ENCODE measurements at regions of chr6 and their contacts with region 1.

Region 1: DNA sequence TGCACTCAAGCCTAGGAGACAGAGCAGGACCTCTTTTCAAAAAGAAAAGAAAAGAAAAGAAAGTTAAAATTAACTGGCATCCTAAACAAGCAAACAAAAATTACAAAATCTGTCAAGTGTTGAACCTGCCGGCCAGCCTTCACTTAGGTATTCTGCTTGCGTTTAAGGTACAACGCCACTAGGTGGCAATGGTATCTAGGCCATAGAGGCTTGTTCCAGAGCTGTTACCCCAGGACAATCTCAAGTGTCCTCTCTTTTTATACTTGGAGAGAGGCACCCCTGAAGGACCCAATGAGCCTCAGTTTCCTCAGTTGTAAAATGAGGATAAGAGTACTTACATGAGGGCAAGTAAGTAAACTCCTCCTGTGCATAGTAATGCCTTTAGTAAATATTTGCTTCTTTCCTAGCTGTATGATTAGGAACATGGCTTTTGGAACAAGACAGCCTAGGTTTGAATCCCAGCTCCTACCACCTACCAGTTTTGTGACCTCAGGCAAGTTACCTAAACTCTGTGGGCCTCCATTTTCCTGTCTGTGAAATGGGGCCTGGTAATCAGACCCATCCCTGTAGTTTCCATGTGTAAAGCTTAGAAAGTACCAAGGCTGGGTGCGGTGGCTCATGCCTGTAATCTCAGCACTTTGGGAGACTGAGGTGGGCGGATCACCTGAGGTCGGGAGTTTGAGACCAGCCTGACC is 5.8 kb upstream of the PACSIN1 start:
- DNase-seq: peak; percentile 75
- H3K4me3 Mint-ChIP-seq: no peak overlapping the region
- H3K27ac Mint-ChIP-seq: no peak overlapping the region
- H3K4me1 Mint-ChIP-seq: peaks cover 1% of the 10 kb centered on the region
- H3K27me3 Mint-ChIP-seq: peaks cover 10% of the 10 kb centered on the region

Region 2: GRCh38 chr6:34447910-34448309 is 12.1 kb before region 1 on chr6:
- CTCF ChIA-PET with region 1: interaction called, 10 read pairs
- intact Hi-C with region 1: no loop called
- DNase-seq: no peak
- H3K4me3 Mint-ChIP-seq: no peak overlapping the region
- H3K27ac Mint-ChIP-seq: no peak overlapping the region
- H3K4me1 Mint-ChIP-seq: no peaks in the 10 kb centered on the region
- H3K27me3 Mint-ChIP-seq: no peaks in the 10 kb centered on the region

Region 3: DNA sequence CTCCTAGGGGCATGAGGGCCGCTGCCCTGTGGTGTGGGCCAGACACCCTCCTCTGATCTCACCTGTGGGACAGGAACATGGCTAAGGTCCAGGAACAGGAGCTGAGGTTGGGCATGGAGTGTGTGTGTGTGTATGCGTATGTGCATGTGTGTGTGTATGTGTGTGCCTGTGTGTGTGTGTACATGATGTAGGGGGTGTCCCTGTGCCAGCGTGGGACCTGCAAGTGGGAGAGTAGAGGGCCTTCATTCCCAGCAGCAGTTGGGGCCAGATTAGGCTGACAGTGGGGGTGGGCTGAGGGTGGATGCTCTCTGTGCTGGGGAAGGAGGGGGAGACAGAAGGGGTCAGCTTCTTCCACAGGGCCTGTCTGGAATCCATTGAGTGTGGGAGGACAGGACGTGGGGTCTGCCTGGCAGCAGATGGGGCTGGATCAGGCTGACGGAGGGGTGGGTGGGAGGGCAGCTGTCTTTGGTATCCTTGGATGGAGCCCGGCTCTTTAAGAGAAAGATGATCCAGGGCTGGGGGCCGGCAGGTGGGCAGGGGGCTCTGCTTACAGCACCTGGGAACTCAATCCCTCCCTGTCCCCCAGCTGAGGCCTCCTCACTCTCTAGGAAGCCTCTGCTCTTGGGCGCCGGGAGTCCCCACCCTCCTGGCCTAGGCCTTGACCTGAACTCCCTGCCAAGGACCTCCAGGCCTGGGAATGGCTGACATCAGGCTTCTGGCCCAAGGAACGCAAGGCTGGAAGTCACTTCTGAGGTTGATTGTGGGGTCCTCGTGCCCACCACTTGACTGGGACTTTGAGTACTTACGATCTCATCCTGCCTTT is 52.1 kb after region 1 on chr6:
- CTCF ChIA-PET with region 1: no interaction called
- intact Hi-C with region 1: no loop called
- DNase-seq: no peak
- H3K4me3 Mint-ChIP-seq: no peak overlapping the region
- H3K27ac Mint-ChIP-seq: no peak overlapping the region
- H3K4me1 Mint-ChIP-seq: no peaks in the 10 kb centered on the region
- H3K27me3 Mint-ChIP-seq: no peaks in the 10 kb centered on the region

Region 4: GRCh38 chr6:34583461-34583860 is 123.4 kb after region 1 on chr6:
- CTCF ChIA-PET with region 1: interaction called, 5 read pairs
- intact Hi-C with region 1: loop called (anchors 1 kb)
- DNase-seq: peak; percentile 24
- H3K4me3 Mint-ChIP-seq: no peak overlapping the region
- H3K27ac Mint-ChIP-seq: no peak overlapping the region
- H3K4me1 Mint-ChIP-seq: peaks cover 6% of the 10 kb centered on the region
- H3K27me3 Mint-ChIP-seq: no peaks in the 10 kb centered on the region

Region 5: DNA sequence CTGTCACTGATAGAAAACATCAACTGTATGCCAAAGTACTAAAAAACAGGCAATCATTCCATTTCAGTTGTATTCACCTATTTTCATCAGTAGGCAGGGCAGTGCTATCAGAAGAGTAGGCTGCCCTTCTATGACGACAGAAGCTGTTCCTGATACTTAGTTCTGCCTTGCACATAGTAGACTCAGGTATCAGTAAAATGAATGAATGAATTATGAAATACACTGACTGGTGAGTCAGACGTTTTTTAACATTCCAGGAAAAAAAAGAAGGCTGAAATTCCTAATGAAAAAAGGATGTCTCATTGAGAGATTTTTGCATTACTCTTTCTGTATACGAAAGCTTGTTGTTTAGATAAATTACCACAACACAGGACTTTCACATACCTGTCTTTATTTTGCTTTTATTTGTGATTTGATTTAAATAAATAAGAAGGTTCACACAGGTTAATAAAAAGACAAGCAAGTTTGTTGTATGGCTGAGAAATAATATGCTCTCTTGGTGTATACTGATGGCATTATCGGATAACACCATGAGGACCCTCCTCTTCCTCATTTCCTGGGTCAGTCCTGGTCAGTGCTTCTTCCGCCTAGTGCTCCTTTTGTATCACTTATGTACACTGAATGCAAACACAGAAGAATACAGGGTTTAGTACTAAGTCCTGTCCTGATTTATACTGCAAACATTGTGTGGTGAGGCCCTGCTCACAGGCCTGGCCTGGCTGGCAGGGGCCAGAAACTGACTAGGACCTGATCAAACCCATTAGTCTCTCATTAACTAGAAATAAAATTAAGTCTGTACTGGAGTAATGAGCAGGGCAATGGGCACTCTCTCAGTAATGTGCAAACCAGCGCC is 135.5 kb after region 1 on chr6:
- CTCF ChIA-PET with region 1: interaction called, 15 read pairs
- intact Hi-C with region 1: no loop called
- DNase-seq: no peak
- H3K4me3 Mint-ChIP-seq: no peak overlapping the region
- H3K27ac Mint-ChIP-seq: no peak overlapping the region
- H3K4me1 Mint-ChIP-seq: peaks cover 16% of the 10 kb centered on the region
- H3K27me3 Mint-ChIP-seq: no peaks in the 10 kb centered on the region

Region 6: GRCh38 chr6:34610819-34611477 is 150.9 kb after region 1 on chr6:
- CTCF ChIA-PET with region 1: interaction called, 111 read pairs
- intact Hi-C with region 1: loop called (anchors 1 kb)
- DNase-seq: no peak
- H3K4me3 Mint-ChIP-seq: no peak overlapping the region
- H3K27ac Mint-ChIP-seq: no peak overlapping the region
- H3K4me1 Mint-ChIP-seq: peaks cover 12% of the 10 kb centered on the region
- H3K27me3 Mint-ChIP-seq: no peaks in the 10 kb centered on the region

Region 7: GRCh38 chr6:35139908-35140655 is 680.0 kb after region 1 on chr6:
- CTCF ChIA-PET with region 1: no interaction called
- intact Hi-C with region 1: loop called (anchors 10 kb)
- DNase-seq: peak; percentile 67
- H3K4me3 Mint-ChIP-seq: no peak overlapping the region
- H3K27ac Mint-ChIP-seq: no peak overlapping the region
- H3K4me1 Mint-ChIP-seq: peaks cover 15% of the 10 kb centered on the region
- H3K27me3 Mint-ChIP-seq: peaks cover 13% of the 10 kb centered on the region

Measured in activated naive CD4-positive, alpha-beta T cell treated with anti-CD3 and anti-CD28 coated beads for 36 hours (primary cell).